Endothelial cell of umbilical vein (primary cell): ENCODE measurements at regions of chr5 and their contacts with region 1.

Region 1: DNA sequence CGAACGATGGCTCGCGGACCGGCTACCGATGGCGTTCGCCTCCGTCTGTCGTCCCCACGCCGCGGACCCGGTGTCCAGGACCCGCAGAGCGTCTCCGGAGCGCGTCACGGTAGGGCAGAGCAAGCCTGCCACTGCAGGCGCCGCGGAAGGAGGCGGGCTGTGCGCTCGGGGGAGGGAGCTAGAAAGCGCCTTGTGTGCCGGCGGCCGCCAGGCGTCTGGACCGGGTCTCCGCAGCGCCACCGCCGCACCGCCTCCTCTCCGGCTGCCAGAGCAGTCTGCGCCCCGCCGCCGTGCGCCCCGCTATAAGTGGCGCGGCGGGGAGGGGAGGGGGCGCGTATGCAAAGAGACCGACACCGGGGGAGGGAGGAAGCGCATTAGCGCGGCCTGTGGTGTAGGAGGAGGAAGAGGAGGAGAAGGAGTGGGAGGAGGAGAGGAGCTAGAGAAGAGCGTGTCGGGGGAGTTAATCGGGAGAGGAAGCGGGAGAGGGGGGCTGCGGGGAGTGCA is at the start of gene ENC1:
- DNase-seq: peak; percentile 95
- H3K4me3 ChIP-seq: peak within 1 kb of the TSS; percentile 81 to 98 (median 82)
- H3K27ac ChIP-seq: peak within 1 kb of the TSS; percentile 91
- H3K4me1 ChIP-seq: peaks cover 54% of the 10 kb centered on the region
- H3K27me3 ChIP-seq: no peaks in the 10 kb centered on the region
- CTCF ChIP-seq: peak; percentile 16 to 72
- POLR2A ChIP-seq: peak; percentile 99
- total RNA-seq, gene ENC1: 42.2 and 53.6 TPM in 2 replicates

Region 2: GRCh38 chr5:73883646-73884045 is 756.9 kb before region 1 on chr5:
- CTCF ChIA-PET with region 1: no interaction called
- POLR2A ChIA-PET with region 1: no interaction called
- dilution Hi-C with region 1: no loop called
- intact Hi-C with region 1: no loop called
- DNase-seq: no peak
- H3K4me3 ChIP-seq: no peak overlapping the region
- H3K27ac ChIP-seq: no peak overlapping the region
- H3K4me1 ChIP-seq: no peaks in the 10 kb centered on the region
- H3K27me3 ChIP-seq: no peaks in the 10 kb centered on the region
- CTCF ChIP-seq: no peak
- POLR2A ChIP-seq: no peak

Region 3: DNA sequence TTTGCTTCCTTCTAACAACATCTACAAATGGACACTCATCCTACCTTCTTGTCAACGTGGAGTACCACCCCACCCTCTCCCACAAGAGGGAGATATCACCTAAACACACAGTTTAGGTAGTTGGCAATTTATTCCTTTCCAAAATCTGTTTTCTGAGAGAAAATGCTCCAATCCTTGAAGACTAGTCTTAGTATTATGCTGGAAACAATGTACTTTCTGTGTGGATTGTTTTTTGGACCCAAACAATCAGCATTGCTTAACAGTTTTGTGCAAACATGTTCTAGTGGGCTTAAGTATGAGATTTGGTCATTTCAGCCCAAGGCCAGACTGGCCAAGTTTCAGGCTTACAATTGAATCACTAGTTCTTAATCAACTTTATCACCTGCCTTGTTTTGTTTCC is 655.4 kb before region 1 on chr5:
- CTCF ChIA-PET with region 1: interaction called, 7 read pairs
- POLR2A ChIA-PET with region 1: no interaction called
- dilution Hi-C with region 1: no loop called
- intact Hi-C with region 1: loop called (anchors 1 kb)
- DNase-seq: peak; percentile 59
- H3K4me3 ChIP-seq: no peak overlapping the region
- H3K27ac ChIP-seq: no peak overlapping the region
- H3K4me1 ChIP-seq: no peaks in the 10 kb centered on the region
- H3K27me3 ChIP-seq: peaks cover 11 to 20% of the 10 kb centered on the region in 2 experiments
- CTCF ChIP-seq: peak; percentile 22 to 41
- POLR2A ChIP-seq: no peak

Region 4: DNA sequence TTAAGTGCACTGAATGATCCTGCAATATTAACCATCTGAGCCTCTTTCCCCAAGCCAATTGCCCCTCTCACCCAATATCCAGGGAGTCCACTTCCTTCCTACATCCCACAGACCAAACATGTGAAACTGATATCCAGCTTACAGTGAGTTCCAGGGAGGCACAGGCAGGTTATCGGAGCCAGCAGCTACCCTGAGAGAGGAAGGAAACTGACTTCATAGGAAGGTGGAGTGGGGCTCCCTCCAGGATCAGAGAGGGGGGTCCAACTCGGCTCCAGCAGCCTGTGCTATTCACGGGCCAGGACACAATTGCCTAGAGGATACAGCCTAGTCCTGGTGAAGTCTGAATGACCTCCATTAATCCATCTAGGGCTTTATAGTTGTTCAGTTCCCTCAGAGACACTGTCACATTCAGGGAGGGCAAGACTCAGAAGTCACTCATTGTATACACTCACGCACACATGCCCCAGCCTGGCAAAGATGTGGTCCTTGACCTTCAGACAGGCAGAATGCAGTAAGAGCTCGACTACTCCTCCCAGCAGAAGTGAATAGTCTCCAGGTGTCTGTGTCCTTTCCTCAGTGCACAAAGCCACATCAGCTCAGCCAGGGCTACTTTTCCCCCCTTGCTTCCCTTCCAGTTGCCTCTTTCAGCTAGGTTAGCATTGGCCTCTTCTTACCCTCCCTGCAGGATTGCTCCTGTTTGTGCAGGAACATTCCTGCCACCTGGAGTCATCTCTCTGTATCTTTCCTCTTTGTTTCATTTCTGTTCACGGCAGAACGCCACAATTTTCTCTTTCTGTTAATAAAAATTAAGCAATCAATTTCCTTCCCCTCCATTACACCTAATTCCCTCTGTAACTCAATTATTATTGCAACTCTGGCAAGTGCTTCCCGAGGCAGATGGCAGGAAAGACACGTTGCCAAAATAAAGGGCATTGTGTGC is 512.9 kb before region 1 on chr5:
- CTCF ChIA-PET with region 1: interaction called, 7 read pairs
- POLR2A ChIA-PET with region 1: interaction called, 3 read pairs
- dilution Hi-C with region 1: no loop called
- intact Hi-C with region 1: loop called (anchors 1 kb)
- DNase-seq: peak; percentile 97
- H3K4me3 ChIP-seq: peak overlapping the region in 1 of 3 experiments; percentile 29
- H3K27ac ChIP-seq: peak overlapping the region; percentile 74
- H3K4me1 ChIP-seq: peaks cover 34% of the 10 kb centered on the region
- H3K27me3 ChIP-seq: no peaks in the 10 kb centered on the region
- CTCF ChIP-seq: peak in 1 of 2 donors; percentile 21
- POLR2A ChIP-seq: peak; percentile 56

Region 5: GRCh38 chr5:74212336-74212735 is 428.2 kb before region 1 on chr5:
- CTCF ChIA-PET with region 1: interaction called, 27 read pairs
- POLR2A ChIA-PET with region 1: interaction called, 10 read pairs
- dilution Hi-C with region 1: no loop called
- intact Hi-C with region 1: loop called (anchors 1 kb)
- DNase-seq: peak; percentile 49
- H3K4me3 ChIP-seq: no peak overlapping the region
- H3K27ac ChIP-seq: no peak overlapping the region
- H3K4me1 ChIP-seq: no peaks in the 10 kb centered on the region
- H3K27me3 ChIP-seq: peaks cover 7 to 11% of the 10 kb centered on the region in 2 experiments
- CTCF ChIP-seq: peak; percentile 31 to 68
- POLR2A ChIP-seq: no peak

Region 6: DNA sequence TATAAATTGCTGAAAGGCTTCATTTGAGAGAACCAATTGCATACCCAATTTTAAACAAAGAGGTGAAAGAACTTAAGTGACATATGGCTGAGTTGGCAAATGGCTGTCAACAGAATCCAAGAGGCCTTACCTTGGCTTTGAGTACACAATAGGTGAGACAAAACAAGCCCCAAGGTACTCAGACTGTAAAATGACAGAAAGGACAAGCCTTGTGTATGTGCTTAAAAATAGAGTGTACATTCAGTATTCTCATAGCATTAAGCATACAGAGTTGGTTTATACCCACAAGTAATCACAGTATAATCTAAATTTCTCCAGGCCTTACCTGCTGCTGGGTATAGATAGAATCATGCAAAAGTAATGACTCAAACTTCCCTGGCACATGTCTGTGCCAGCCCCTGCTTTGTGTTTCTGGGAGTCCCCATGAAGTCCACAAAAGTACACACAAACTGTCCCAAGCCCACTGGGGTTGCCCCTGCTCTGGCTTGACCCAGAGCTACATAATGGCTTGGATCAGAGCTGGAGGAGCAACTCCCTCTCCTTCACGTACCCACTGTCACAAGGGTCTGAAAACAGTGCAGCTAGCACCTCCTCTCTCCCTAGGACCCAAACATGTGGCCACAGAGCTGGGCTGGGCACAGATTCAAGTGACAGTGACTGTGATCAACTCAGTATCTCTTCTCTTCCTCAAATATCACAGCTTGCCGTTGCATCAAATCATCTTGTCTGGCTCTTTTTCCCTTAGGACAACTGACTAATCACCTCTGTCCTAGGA is 250.8 kb before region 1 on chr5:
- CTCF ChIA-PET with region 1: interaction called, 20 read pairs
- POLR2A ChIA-PET with region 1: no interaction called
- dilution Hi-C with region 1: no loop called
- intact Hi-C with region 1: no loop called
- DNase-seq: no peak
- H3K4me3 ChIP-seq: no peak overlapping the region
- H3K27ac ChIP-seq: no peak overlapping the region
- H3K4me1 ChIP-seq: peaks cover 4% of the 10 kb centered on the region
- H3K27me3 ChIP-seq: no peaks in the 10 kb centered on the region
- CTCF ChIP-seq: no peak
- POLR2A ChIP-seq: no peak

Region 7: GRCh38 chr5:74433255-74433895 is 207.1 kb before region 1 on chr5:
- CTCF ChIA-PET with region 1: interaction called, 5 read pairs
- POLR2A ChIA-PET with region 1: interaction called, 3 read pairs
- dilution Hi-C with region 1: no loop called
- intact Hi-C with region 1: loop called (anchors 2 kb)
- DNase-seq: peak; percentile 87
- H3K4me3 ChIP-seq: peak overlapping the region in 1 of 3 experiments; percentile 13
- H3K27ac ChIP-seq: peak overlapping the region; percentile 86
- H3K4me1 ChIP-seq: peaks cover 28% of the 10 kb centered on the region
- H3K27me3 ChIP-seq: no peaks in the 10 kb centered on the region
- CTCF ChIP-seq: no peak
- POLR2A ChIP-seq: no peak

Region 8: DNA sequence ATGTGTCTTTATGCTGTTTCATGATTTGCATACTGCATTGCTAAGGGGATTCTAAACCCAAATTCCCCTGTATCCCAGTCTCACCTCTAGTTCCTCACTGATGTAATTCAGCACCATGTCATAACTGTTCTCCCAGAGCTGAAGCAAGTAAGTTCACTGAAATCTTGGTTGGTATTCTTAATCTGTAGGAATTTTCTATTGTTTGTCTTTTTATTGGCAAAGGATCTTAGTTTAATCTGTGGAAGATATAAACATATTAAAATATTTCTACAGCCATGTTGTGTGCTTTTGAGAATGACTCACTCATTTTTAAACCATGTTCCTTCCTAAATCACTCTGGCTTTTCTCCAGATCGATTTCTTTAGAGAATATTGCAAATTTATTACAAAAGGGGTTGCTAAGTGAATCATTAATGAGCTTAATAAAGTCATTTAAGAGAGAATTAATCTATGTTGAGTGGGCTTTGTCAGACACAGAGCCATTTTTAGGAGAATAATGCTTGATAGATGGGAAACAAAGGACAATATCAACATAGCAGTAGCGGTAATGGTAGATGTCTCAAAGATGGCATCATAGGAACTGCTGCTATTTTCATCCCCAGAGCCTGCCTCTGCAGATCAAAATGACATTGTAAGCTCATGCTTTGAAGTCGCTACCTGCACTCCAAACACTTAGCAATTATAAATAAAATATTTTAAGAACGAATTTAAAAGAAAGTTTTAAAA is 110.0 kb before region 1 on chr5:
- CTCF ChIA-PET with region 1: no interaction called
- POLR2A ChIA-PET with region 1: no interaction called
- dilution Hi-C with region 1: no loop called
- intact Hi-C with region 1: no loop called
- DNase-seq: peak; percentile 41
- H3K4me3 ChIP-seq: no peak overlapping the region
- H3K27ac ChIP-seq: no peak overlapping the region
- H3K4me1 ChIP-seq: no peaks in the 10 kb centered on the region
- H3K27me3 ChIP-seq: no peaks in the 10 kb centered on the region
- CTCF ChIP-seq: no peak
- POLR2A ChIP-seq: no peak

Region 9: GRCh38 chr5:74595143-74595925 is 45.2 kb before region 1 on chr5:
- CTCF ChIA-PET with region 1: interaction called, 10 read pairs
- POLR2A ChIA-PET with region 1: interaction called, 4 read pairs
- dilution Hi-C with region 1: no loop called
- intact Hi-C with region 1: loop called (anchors 1 kb)
- DNase-seq: peak; percentile 89
- H3K4me3 ChIP-seq: no peak overlapping the region
- H3K27ac ChIP-seq: peak overlapping the region; percentile 89
- H3K4me1 ChIP-seq: peaks cover 34% of the 10 kb centered on the region
- H3K27me3 ChIP-seq: no peaks in the 10 kb centered on the region
- CTCF ChIP-seq: no peak
- POLR2A ChIP-seq: no peak